Spleen (tissue), 13 donors: ENCODE measurements at regions of chr14 and their contacts with region 1.

Region 1: DNA sequence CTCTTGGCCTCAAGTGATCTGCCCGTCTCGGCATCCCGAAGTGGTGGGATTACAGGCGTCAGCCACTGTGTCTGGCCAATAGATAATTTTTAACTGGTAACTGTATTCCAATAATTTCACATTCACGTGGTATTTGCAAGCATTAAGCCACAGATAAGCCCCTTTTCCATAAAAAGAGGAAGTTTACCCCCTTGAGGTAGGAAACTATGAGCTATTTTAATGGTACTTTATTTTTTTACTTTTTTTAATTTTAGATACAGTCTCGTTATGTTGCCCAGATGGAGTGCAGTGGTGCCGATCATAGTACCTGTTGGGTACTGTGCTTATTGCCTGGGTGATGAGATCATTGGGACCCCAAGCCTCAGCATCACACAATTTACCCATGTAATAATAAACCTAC is 42.9 kb upstream of the AP4S1 start:
- DNase-seq: no peak
- H3K4me3 ChIP-seq: no peak overlapping the region
- H3K27ac ChIP-seq: no peak overlapping the region
- H3K4me1 ChIP-seq: peaks cover 3 to 71% (median 35%) of the 10 kb centered on the region in 6 donors
- H3K27me3 ChIP-seq: no peaks in the 10 kb centered on the region
- CTCF ChIP-seq: no peak
- POLR2A ChIP-seq: no peak

Region 2: GRCh38 chr14:31084385-31084784 is 101.9 kb after region 1 on chr14:
- intact Hi-C with region 1: loop called (anchors 5 kb)
- DNase-seq: no peak
- H3K4me3 ChIP-seq: no peak overlapping the region
- H3K27ac ChIP-seq: no peak overlapping the region
- H3K4me1 ChIP-seq: peaks cover 0 to 7% (median 0%) of the 10 kb centered on the region in 6 donors
- H3K27me3 ChIP-seq: no peaks in the 10 kb centered on the region
- CTCF ChIP-seq: no peak
- POLR2A ChIP-seq: no peak

Region 3: DNA sequence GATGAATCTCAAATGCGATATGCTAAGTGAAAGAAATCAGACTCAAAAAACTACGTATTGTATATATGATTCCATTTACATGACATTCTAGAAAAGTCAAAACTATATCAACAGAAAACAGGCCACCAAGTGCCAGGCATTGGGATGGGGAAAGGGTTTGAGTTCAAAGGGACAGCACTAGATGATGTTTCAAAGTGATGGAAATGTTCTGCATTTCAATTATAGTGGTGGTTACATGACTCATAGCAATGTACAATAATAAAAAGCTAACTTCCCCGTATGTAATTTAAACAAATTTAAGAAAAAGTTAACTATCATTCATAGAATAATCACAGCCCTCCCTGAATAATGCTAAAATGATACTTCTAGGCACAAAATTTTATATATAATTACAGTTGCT is 211.6 kb after region 1 on chr14:
- intact Hi-C with region 1: no loop called
- DNase-seq: no peak
- H3K4me3 ChIP-seq: no peak overlapping the region
- H3K27ac ChIP-seq: no peak overlapping the region
- H3K4me1 ChIP-seq: peaks cover 18 to 76% (median 40%) of the 10 kb centered on the region in 6 donors
- H3K27me3 ChIP-seq: no peaks in the 10 kb centered on the region
- CTCF ChIP-seq: no peak
- POLR2A ChIP-seq: no peak